A673 (cell line): ENCODE measurements at regions of chr4 and their contacts with region 1.

Region 1: DNA sequence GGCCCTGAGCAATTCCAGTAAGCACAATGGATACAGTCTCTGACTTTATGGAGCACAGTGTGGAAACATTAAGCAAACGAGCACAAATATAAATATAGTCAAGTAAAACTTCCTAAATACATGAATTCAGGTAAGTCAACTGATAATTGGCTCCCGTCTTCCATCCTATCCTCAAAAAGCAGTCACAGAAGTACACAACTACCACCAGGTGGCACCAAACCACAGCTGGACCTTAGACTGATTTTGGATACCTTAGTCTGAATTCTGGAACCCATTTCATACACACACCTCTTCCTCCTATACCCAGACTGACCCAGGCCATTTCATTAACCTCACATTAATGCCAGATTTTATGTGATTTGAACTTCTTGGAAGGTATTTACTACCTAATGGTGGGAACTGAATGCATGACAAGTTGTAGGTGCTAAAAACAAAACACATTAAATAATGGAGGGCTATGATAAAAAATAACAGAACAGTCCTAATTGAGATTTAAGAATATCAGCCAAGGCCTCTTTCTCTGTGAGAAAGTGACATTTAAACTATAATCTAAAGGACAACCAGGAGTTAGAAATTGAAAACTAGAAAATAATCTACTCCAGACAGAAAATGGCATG is 77.5 kb downstream of the ELF2 start:
- DNase-seq: peak; percentile 90
- H3K4me3 ChIP-seq: no peak overlapping the region
- H3K27ac ChIP-seq: peak overlapping the region; percentile 44
- H3K4me1 ChIP-seq: peaks cover 9% of the 10 kb centered on the region
- H3K27me3 ChIP-seq: no peaks in the 10 kb centered on the region
- CTCF ChIP-seq: peak; percentile 88

Region 2: GRCh38 chr4:138494931-138495330 is 604.5 kb before region 1 on chr4:
- CTCF ChIA-PET with region 1: interaction called, 12 read pairs
- POLR2A ChIA-PET with region 1: no interaction called
- intact Hi-C with region 1: no loop called
- DNase-seq: peak; percentile 86
- H3K4me3 ChIP-seq: no peak overlapping the region
- H3K27ac ChIP-seq: no peak overlapping the region
- H3K4me1 ChIP-seq: peaks cover 14% of the 10 kb centered on the region
- H3K27me3 ChIP-seq: no peaks in the 10 kb centered on the region
- CTCF ChIP-seq: peak; percentile 61

Region 3: DNA sequence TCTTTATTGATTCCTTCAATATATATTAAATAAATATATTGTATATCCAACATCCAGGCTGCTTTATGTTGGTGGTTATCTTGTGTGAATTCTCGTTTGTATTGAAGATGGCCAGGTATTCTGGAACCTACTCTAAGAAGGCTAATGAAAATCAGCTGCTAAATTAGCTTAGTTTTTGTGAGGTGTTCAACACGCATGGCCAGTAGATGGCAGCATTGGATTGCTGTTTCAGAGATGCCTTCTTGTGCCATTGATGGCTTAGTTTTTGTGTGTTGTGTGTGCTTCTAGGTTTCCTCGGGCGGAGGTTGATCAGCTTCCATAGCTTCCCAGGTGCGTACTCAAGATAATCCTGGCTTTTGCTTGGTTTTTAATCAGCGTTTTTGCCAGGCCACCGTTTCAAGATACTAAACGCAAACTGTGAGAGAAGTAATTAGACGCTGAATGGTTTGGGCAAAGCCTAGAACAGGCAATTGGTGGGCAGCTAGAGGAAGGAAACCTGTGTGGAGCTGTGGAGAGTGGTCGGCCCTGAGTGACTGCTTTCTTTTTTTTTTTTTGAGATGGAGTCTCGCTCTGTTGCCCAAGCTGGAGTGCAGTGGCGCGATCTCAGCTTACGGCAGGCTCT is 68.7 kb before region 1 on chr4:
- CTCF ChIA-PET with region 1: no interaction called
- POLR2A ChIA-PET with region 1: no interaction called
- intact Hi-C with region 1: loop called (anchors 5 kb)
- DNase-seq: peak; percentile 86
- H3K4me3 ChIP-seq: no peak overlapping the region
- H3K27ac ChIP-seq: no peak overlapping the region
- H3K4me1 ChIP-seq: peaks cover 3% of the 10 kb centered on the region
- H3K27me3 ChIP-seq: no peaks in the 10 kb centered on the region
- CTCF ChIP-seq: peak; percentile 91

Region 4: GRCh38 chr4:139083956-139084803 is 15.3 kb before region 1 on chr4:
- CTCF ChIA-PET with region 1: no interaction called
- POLR2A ChIA-PET with region 1: no interaction called
- intact Hi-C with region 1: no loop called
- DNase-seq: peak; percentile 97
- H3K4me3 ChIP-seq: peak overlapping the region; percentile 88
- H3K27ac ChIP-seq: peak overlapping the region; percentile 89
- H3K4me1 ChIP-seq: peaks cover 18% of the 10 kb centered on the region
- H3K27me3 ChIP-seq: no peaks in the 10 kb centered on the region
- CTCF ChIP-seq: peak; percentile 33; the same call in 1 of the 2 replicates

Region 5: GRCh38 chr4:139142980-139143379 is 43.5 kb after region 1 on chr4:
- CTCF ChIA-PET with region 1: interaction called, 10 read pairs
- POLR2A ChIA-PET with region 1: no interaction called
- intact Hi-C with region 1: no loop called
- DNase-seq: no peak
- H3K4me3 ChIP-seq: no peak overlapping the region
- H3K27ac ChIP-seq: no peak overlapping the region
- H3K4me1 ChIP-seq: peaks cover 13% of the 10 kb centered on the region
- H3K27me3 ChIP-seq: no peaks in the 10 kb centered on the region
- CTCF ChIP-seq: no peak

Region 6: GRCh38 chr4:139177868-139178611 is 78.6 kb after region 1 on chr4:
- CTCF ChIA-PET with region 1: no interaction called
- POLR2A ChIA-PET with region 1: no interaction called
- intact Hi-C with region 1: loop called (anchors 5 kb)
- DNase-seq: peak; percentile 98
- H3K4me3 ChIP-seq: peak overlapping the region; percentile 98
- H3K27ac ChIP-seq: peak overlapping the region; percentile 92
- H3K4me1 ChIP-seq: peaks cover 21% of the 10 kb centered on the region
- H3K27me3 ChIP-seq: no peaks in the 10 kb centered on the region
- CTCF ChIP-seq: no peak

Region 7: DNA sequence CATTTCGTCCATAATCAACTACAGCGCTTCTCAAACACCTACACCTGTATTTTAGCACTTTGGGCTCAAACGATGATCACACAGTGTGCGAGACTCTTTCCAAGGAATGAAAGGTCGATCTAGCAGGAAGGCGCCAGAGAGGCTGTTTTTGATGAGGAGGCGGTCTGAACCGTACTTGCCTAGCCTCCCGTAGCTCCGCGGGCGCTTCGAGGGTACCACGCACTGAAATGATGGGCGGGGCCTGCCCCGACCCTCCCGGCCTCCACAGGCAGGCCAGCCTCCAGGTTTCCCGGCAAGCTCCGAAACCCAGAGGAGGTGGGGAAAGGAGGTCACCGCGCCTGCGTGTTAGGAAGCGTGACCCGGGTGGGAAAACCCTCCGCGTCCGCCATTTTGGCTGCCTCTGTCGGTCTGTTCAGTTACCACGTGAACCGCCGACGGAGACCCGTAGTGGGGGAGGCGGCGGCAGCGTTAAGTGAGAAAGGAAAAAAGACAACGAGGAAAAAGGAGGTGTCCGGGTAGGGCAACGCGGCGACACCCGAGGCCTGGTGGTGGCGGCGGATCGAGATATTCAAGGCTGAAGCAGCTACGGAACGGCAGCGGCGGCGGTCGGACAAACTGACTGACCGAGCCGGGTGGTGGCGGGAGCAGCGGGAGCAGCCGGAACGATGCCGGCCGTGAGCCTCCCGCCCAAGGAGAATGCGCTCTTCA is 201.8 kb after region 1 on chr4 and contains the start of gene NAA15:
- CTCF ChIA-PET with region 1: no interaction called
- POLR2A ChIA-PET with region 1: no interaction called
- intact Hi-C with region 1: loop called (anchors 2 kb)
- DNase-seq: peak; percentile 100
- H3K4me3 ChIP-seq: peak within 1 kb of the TSS; percentile 93
- H3K27ac ChIP-seq: peak within 1 kb of the TSS; percentile 95
- H3K4me1 ChIP-seq: peaks cover 15% of the 10 kb centered on the region
- H3K27me3 ChIP-seq: no peaks in the 10 kb centered on the region
- CTCF ChIP-seq: no peak
- total RNA-seq, gene NAA15: 105 and 123 TPM in 2 replicates